ENCODE measurements at regions of chr6 and their contacts with region 1.

Region 1: GRCh38 chr6:130322673-130323268 is 43.0 kb upstream of the TMEM200A start:
- DNase-seq: peak; percentile 16 to 83 (median 42)
- ATAC-seq: peak; percentile 44
- H3K4me3 ChIP-seq: no peak overlapping the region
- H3K4me3 Mint-ChIP-seq: no peak overlapping the region
- H3K27ac ChIP-seq: no peak overlapping the region
- H3K27ac Mint-ChIP-seq: no peak overlapping the region
- H3K4me1 ChIP-seq: no peaks in the 10 kb centered on the region
- H3K4me1 Mint-ChIP-seq: peaks cover 4% of the 10 kb centered on the region
- H3K27me3 ChIP-seq: no peaks in the 10 kb centered on the region
- H3K27me3 Mint-ChIP-seq: no peaks in the 10 kb centered on the region
- CTCF ChIP-seq: peak; percentile 93

Region 2: GRCh38 chr6:130365166-130366106 is 42.7 kb after region 1 on chr6 and contains the start of gene TMEM200A:
- CTCF ChIA-PET with region 1: no interaction called
- POLR2A ChIA-PET with region 1: no interaction called
- intact Hi-C with region 1: no loop called
- DNase-seq: peak; percentile 8 to 61 (median 33)
- ATAC-seq: peak; percentile 58
- H3K4me3 ChIP-seq: peak within 1 kb of the TSS; percentile 80
- H3K4me3 Mint-ChIP-seq: peak within 1 kb of the TSS; percentile 89
- H3K27ac ChIP-seq: no peak within 1 kb of the TSS
- H3K27ac Mint-ChIP-seq: peak within 1 kb of the TSS; percentile 18
- H3K4me1 ChIP-seq: peaks cover 15% of the 10 kb centered on the region
- H3K4me1 Mint-ChIP-seq: peaks cover 29% of the 10 kb centered on the region
- H3K27me3 ChIP-seq: peaks cover 0 to 7% of the 10 kb centered on the region in 2 experiments
- H3K27me3 Mint-ChIP-seq: peaks cover 18% of the 10 kb centered on the region
- CTCF ChIP-seq: peak; percentile 68
- total RNA-seq, gene TMEM200A: 0.30 to 0.34 TPM

Region 3: GRCh38 chr6:130381459-130382380 is 58.9 kb after region 1 on chr6:
- CTCF ChIA-PET with region 1: no interaction called
- POLR2A ChIA-PET with region 1: no interaction called
- intact Hi-C with region 1: loop called (anchors 5 kb)
- DNase-seq: peak in 10 of 14 experiments; percentile 7 to 79 (median 30)
- ATAC-seq: peak; percentile 97
- H3K4me3 ChIP-seq: no peak overlapping the region
- H3K4me3 Mint-ChIP-seq: no peak overlapping the region
- H3K27ac ChIP-seq: no peak overlapping the region
- H3K27ac Mint-ChIP-seq: no peak overlapping the region
- H3K4me1 ChIP-seq: peaks cover 18% of the 10 kb centered on the region
- H3K4me1 Mint-ChIP-seq: peaks cover 18% of the 10 kb centered on the region
- H3K27me3 ChIP-seq: no peaks in the 10 kb centered on the region
- H3K27me3 Mint-ChIP-seq: no peaks in the 10 kb centered on the region
- CTCF ChIP-seq: peak; percentile 46

Region 4: DNA sequence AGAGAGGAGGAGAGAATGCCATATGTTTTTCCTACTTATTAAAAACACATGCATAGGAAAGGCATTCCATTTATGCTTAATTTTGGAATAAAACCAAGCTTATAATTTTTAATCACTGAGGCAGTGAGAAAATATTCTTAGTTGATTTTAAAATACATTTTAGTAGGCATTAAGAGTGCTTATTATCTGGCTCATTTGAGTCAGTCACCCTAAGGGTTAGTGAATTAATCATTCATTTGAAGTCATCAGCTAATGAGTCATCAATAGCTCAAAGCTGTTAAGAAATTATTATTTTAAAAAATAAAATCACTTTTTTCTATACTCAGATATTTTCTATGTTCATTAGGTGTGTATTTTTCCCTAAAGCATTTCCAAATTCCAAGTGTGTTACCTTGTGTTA is 124.6 kb after region 1 on chr6:
- CTCF ChIA-PET with region 1: no interaction called
- POLR2A ChIA-PET with region 1: no interaction called
- intact Hi-C with region 1: no loop called
- DNase-seq: no peak
- ATAC-seq: no peak
- H3K4me3 ChIP-seq: no peak overlapping the region
- H3K4me3 Mint-ChIP-seq: no peak overlapping the region
- H3K27ac ChIP-seq: no peak overlapping the region
- H3K27ac Mint-ChIP-seq: no peak overlapping the region
- H3K4me1 ChIP-seq: no peaks in the 10 kb centered on the region
- H3K4me1 Mint-ChIP-seq: no peaks in the 10 kb centered on the region
- H3K27me3 ChIP-seq: no peaks in the 10 kb centered on the region
- H3K27me3 Mint-ChIP-seq: no peaks in the 10 kb centered on the region
- CTCF ChIP-seq: no peak

Region 5: GRCh38 chr6:130697995-130698535 is 375.3 kb after region 1 on chr6:
- CTCF ChIA-PET with region 1: interaction called, 14 read pairs
- POLR2A ChIA-PET with region 1: interaction called, 7 read pairs
- intact Hi-C with region 1: loop called (anchors 1 kb)
- DNase-seq: peak; percentile 13 to 72 (median 42)
- ATAC-seq: peak; percentile 71
- H3K4me3 ChIP-seq: no peak overlapping the region
- H3K4me3 Mint-ChIP-seq: no peak overlapping the region
- H3K27ac ChIP-seq: no peak overlapping the region
- H3K27ac Mint-ChIP-seq: no peak overlapping the region
- H3K4me1 ChIP-seq: peaks cover 13% of the 10 kb centered on the region
- H3K4me1 Mint-ChIP-seq: peaks cover 35% of the 10 kb centered on the region
- H3K27me3 ChIP-seq: no peaks in the 10 kb centered on the region
- H3K27me3 Mint-ChIP-seq: no peaks in the 10 kb centered on the region
- CTCF ChIP-seq: peak; percentile 85

Region 6: DNA sequence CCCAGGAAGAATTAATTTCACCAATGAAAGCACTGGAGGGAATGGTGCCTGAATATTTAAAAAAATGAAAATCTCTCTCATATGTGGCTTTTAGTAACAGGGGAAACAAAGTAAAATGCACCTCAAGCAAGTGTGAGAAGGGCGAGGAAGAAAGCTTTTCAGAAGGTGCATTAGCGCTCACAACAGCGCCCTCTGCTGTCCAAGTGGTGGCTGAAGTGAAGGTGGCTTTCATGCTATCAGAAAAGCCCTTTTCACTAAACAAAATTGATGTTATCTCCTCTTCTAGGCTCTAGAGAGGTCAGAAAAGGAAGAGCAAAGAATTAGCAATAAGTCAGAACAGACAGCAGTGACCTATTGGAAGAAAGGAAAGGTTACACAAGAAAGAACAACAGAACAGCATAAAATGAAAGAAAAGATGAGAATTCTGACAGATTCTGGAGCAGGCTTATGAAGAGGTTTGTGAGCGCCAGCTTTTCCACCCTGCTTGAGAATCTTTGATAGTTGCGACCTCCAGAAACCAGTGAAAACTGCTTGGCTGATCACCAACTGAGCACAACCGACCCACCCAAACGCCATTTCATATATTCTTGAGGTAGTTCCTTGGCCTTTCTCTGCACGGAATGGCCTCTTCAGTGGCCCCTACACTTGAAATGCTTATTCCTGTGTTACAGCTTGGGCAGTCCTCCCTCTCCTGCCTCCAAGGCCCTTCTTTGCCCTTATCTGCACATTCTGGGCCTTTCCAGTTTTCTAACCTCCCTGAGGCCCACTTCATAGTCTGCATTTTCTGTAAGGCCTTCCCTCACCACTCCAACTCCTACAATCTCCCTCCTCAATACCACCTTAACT is 549.7 kb after region 1 on chr6:
- CTCF ChIA-PET with region 1: interaction called, 3 read pairs
- POLR2A ChIA-PET with region 1: no interaction called
- intact Hi-C with region 1: loop called (anchors 1 to 2 kb)
- DNase-seq: peak; percentile 51 to 79 (median 66)
- ATAC-seq: peak; percentile 49
- H3K4me3 ChIP-seq: no peak overlapping the region
- H3K4me3 Mint-ChIP-seq: no peak overlapping the region
- H3K27ac ChIP-seq: no peak overlapping the region
- H3K27ac Mint-ChIP-seq: no peak overlapping the region
- H3K4me1 ChIP-seq: no peaks in the 10 kb centered on the region
- H3K4me1 Mint-ChIP-seq: no peaks in the 10 kb centered on the region
- H3K27me3 ChIP-seq: no peaks in the 10 kb centered on the region
- H3K27me3 Mint-ChIP-seq: no peaks in the 10 kb centered on the region
- CTCF ChIP-seq: peak; percentile 87

Region 7: GRCh38 chr6:131792091-131792496 is 1469.3 kb after region 1 on chr6:
- CTCF ChIA-PET with region 1: no interaction called
- POLR2A ChIA-PET with region 1: no interaction called
- intact Hi-C with region 1: no loop called
- DNase-seq: no peak
- ATAC-seq: no peak
- H3K4me3 ChIP-seq: no peak overlapping the region
- H3K4me3 Mint-ChIP-seq: no peak overlapping the region
- H3K27ac ChIP-seq: no peak overlapping the region
- H3K27ac Mint-ChIP-seq: no peak overlapping the region
- H3K4me1 ChIP-seq: no peaks in the 10 kb centered on the region
- H3K4me1 Mint-ChIP-seq: no peaks in the 10 kb centered on the region
- H3K27me3 ChIP-seq: peaks cover 3 to 4% of the 10 kb centered on the region in 2 experiments
- H3K27me3 Mint-ChIP-seq: peaks cover 18% of the 10 kb centered on the region
- CTCF ChIP-seq: no peak

Measured in CD4-positive, alpha-beta T cell (primary cell).